ENCODE measurements at regions of chr14 and their contacts with region 1.

Region 1: DNA sequence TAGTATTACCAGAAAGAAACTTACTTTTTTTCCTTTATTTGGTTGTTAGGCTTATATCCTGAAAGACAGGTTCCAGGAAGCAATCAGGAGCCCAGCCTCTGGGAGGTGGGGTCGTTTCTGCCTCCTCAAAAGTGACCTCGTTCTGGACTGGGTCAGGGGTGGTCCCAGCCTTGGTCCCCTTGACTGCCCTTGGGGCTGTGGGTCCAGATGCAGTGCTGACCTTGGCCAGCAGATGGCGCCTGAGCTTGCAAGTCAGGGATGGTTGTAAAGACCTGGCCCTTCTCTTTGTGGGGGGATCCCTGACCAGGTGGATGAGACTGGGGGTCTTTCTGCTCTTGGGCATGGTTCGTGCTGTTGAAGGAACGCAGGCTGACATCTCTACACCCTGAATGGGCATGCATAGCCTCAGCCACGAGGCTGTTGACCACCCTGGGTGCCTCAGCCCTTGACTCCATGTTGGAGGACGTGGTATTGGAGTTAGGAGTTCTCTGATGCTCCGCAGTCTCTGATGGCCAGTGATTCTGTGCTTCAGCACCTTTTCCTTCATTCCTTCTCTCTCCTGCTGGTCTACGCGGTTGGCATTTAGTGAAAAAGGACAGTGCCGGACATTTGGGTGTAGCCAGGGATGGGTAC is 62.4 kb downstream of the ADCK1 start:
- DNase-seq: peak; percentile 65 to 89 (median 72)
- ATAC-seq: peak; percentile 64 to 77 (median 74)
- H3K4me3 ChIP-seq: no peak overlapping the region
- H3K27ac ChIP-seq: no peak overlapping the region
- H3K4me1 ChIP-seq: peaks cover 0 to 15% (median 0%) of the 10 kb centered on the region in 12 donors
- H3K27me3 ChIP-seq: no peaks in the 10 kb centered on the region
- CTCF ChIP-seq: peak; percentile 93 to 98 (median 96)
- POLR2A ChIP-seq: no peak

Region 2: DNA sequence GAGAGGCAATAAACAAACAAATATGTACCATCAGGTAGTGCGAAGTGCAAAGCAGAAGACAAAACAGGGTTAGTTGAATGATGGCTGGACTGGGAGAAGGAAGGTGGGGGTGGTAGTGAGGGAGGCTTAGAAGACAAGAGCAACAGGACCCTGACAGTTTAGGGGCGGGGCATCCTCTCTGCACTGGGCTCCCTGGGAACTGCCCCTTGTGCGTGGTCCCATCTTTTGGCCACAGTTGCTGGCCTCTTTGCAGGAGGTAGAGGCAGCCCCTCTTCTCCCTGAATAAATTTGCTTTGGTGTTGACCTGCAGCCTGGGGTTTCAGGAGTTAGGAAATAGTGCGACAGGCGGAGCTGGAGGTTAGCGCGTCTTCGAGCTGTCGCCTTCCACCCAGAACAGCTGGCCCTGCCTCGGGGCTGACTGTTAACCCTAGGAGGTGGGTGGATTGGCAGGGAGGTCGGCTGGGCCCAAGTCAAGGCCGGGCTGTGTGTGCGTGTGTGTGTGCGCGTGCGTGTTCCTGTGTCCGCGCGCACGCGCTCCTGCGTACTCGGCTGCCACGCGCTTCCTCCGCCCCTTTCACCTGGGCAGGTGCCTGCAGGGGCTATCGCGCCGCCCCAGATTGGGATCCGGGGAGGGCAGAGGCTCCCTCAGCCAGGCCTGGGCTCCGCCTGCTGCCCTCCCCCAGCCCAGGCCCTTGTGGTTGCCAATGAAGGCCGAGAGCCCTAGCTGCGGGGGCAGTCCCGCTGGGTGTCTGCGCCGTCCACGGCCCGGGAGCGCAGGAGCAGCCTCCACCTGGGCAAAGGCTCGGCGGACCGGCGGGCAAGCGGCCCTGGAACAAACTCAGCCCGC is 118.4 kb after region 1 on chr14:
- intact Hi-C with region 1: loop called in 1 of 10 experiments (anchors 10 kb)
- DNase-seq: peak in 2 of 5 donors; percentile 46 to 55
- ATAC-seq: peak; percentile 16 to 69 (median 55)
- H3K4me3 ChIP-seq: peak overlapping the region in 11 of 12 donors; percentile 25 to 60 (median 47)
- H3K27ac ChIP-seq: peak overlapping the region in 5 of 12 donors; percentile 2 to 67 (median 39)
- H3K4me1 ChIP-seq: peaks cover 0 to 12% (median 0%) of the 10 kb centered on the region in 12 donors
- H3K27me3 ChIP-seq: peaks cover 0 to 24% (median 11%) of the 10 kb centered on the region in 9 donors
- CTCF ChIP-seq: no peak
- POLR2A ChIP-seq: no peak

Region 3: DNA sequence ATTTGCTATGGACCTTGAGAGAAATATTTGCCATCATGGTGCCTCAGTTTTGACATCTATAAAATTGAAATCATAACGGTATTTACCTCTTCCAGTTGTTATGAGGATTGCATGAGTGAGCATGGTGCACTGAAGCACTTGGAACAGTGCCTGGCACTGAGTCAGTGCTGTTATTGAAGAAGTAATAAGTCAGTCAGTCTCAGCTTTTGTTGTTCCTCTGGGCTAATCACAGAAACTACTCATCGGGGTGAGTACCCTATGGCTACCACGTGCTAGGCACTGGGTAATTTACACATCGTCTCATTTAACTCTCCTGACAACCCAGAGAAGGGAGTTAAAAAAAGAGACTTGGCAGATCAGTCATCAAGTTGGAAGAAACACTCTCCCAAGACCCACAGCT is 148.4 kb after region 1 on chr14:
- intact Hi-C with region 1: loop called in 1 of 10 experiments (anchors 10 kb)
- DNase-seq: no peak
- ATAC-seq: peak in 1 of 4 donors; percentile 57
- H3K4me3 ChIP-seq: no peak overlapping the region
- H3K27ac ChIP-seq: no peak overlapping the region
- H3K4me1 ChIP-seq: no peaks in the 10 kb centered on the region
- H3K27me3 ChIP-seq: peaks cover 0 to 3% (median 0%) of the 10 kb centered on the region in 9 donors
- CTCF ChIP-seq: no peak
- POLR2A ChIP-seq: no peak

Region 4: DNA sequence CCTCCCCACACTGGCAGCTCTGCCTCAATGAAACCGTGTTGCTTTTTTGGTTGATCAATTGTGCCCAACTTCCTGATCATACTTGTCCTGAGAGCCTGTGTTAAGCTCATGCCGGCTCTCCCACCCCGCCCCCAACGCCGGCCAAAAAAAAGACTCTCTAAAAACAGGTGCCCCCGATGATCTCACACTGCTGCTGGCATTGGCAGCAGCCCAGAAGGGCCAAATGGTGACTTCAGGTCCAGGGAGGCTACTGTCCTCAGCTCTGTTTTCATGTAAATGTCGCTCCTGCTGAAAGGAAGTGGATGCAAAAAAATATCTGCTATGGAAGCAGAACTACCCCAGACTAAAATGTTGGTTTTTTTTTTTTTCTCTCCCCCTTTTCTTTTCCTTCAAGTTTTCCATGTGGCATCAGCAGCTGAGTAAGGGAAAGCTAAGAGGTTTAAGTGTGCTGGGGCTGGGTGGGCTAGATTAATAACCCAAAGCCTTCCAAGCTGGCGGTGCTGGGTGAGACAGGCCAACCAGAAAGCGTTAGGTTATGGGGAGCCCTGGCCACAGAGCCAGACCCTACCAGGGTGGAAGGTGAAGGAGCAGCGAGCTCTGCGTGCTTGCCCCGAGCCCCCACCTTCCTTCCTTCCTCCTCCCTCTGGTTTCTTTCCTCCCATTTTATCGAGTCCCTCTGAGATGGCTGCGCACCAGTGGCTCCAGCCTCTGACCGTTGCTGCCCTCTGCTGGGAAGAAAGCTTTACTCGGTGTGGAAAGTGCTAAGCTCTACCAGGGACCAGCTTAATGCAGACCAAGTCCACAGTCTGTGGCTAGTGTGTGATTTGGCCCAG is 704.0 kb after region 1 on chr14:
- intact Hi-C with region 1: loop called in 9 of 10 experiments (anchors 2 to 10 kb)
- DNase-seq: peak; percentile 57 to 75 (median 73)
- ATAC-seq: peak; percentile 90 to 97 (median 94)
- H3K4me3 ChIP-seq: peak overlapping the region in 10 of 12 donors; percentile 15 to 59 (median 33)
- H3K27ac ChIP-seq: peak overlapping the region in 1 of 12 donors; percentile 39
- H3K4me1 ChIP-seq: peaks cover 0 to 8% (median 0%) of the 10 kb centered on the region in 12 donors
- H3K27me3 ChIP-seq: peaks cover 0 to 2% (median 0%) of the 10 kb centered on the region in 9 donors
- CTCF ChIP-seq: peak; percentile 58 to 86 (median 74)
- POLR2A ChIP-seq: no peak

Measured in heart left ventricle (tissue), 16 donors.